ENCODE measurements at regions of chr3 and their contacts with region 1.

Region 1: GRCh38 chr3:141231101-141231935 is at the start of gene PXYLP1:
- DNase-seq: peak; percentile 96
- H3K4me3 ChIP-seq: peak within 1 kb of the TSS; percentile 86 to 96 (median 91)
- H3K27ac ChIP-seq: peak within 1 kb of the TSS; percentile 76 to 87 (median 84)
- H3K4me1 ChIP-seq: peaks cover 16 to 27% (median 18%) of the 10 kb centered on the region in 4 donors
- H3K27me3 ChIP-seq: no peaks in the 10 kb centered on the region
- CTCF ChIP-seq: peak; percentile 66 to 85 (median 78)
- EP300 ChIP-seq: no peak
- POLR2A ChIP-seq: peak; percentile 8
- total RNA-seq, gene PXYLP1: 4.5 to 12.5 (median 9.4) TPM

Region 2: GRCh38 chr3:141279077-141279967 is 48.0 kb after region 1 on chr3:
- intact Hi-C with region 1: loop called (anchors 1 kb)
- DNase-seq: no peak
- H3K4me3 ChIP-seq: no peak overlapping the region
- H3K27ac ChIP-seq: peak overlapping the region; percentile 51 to 73 (median 60)
- H3K4me1 ChIP-seq: peaks cover 18 to 28% (median 22%) of the 10 kb centered on the region in 4 donors
- H3K27me3 ChIP-seq: no peaks in the 10 kb centered on the region
- CTCF ChIP-seq: peak; percentile 55 to 63 (median 61)
- EP300 ChIP-seq: no peak
- POLR2A ChIP-seq: no peak

Region 3: GRCh38 chr3:141553055-141553454 is 321.7 kb after region 1 on chr3:
- intact Hi-C with region 1: no loop called
- DNase-seq: no peak
- H3K4me3 ChIP-seq: no peak overlapping the region
- H3K27ac ChIP-seq: no peak overlapping the region
- H3K4me1 ChIP-seq: peaks cover 0 to 4% (median 0%) of the 10 kb centered on the region in 4 donors
- H3K27me3 ChIP-seq: no peaks in the 10 kb centered on the region
- CTCF ChIP-seq: no peak
- EP300 ChIP-seq: no peak
- POLR2A ChIP-seq: no peak